CD8-positive, alpha-beta T cell (primary cell): ENCODE measurements at regions of chr2 and their contacts with region 1.

Region 1: GRCh38 chr2:160429248-160430000 is 64.2 kb downstream of the RBMS1 start:
- DNase-seq: peak in 2 of 9 experiments; percentile 72 to 81
- ATAC-seq: peak; percentile 53
- H3K4me3 ChIP-seq: no peak overlapping the region
- H3K4me3 Mint-ChIP-seq: peak overlapping the region; percentile 26
- H3K27ac ChIP-seq: peak overlapping the region in 1 of 2 experiments; percentile 77
- H3K27ac Mint-ChIP-seq: peak overlapping the region; percentile 92
- H3K4me1 ChIP-seq: peaks cover 42% of the 10 kb centered on the region
- H3K4me1 Mint-ChIP-seq: peaks cover 71% of the 10 kb centered on the region
- H3K27me3 ChIP-seq: no peaks in the 10 kb centered on the region
- H3K27me3 Mint-ChIP-seq: no peaks in the 10 kb centered on the region
- CTCF ChIP-seq: peak; percentile 84

Region 2: DNA sequence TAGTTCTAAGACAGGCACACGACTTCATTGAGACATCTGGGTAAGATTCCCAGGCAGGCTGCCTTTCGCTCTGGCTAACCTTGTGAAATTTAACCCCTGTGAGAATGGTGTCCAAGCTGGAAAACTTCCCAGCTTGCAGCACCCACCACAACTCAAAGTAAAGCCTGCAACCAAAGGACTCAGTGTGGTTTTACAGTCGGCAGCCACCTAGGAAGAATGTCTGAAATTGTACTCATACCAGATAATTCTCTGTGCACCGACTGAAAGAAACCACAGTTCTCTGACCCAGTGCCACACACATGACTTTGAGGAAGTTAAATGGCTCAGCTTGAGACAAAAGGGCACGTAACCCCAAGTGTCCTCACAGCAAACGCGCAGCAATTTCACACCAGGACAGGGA is 61.5 kb before region 1 on chr2:
- CTCF ChIA-PET with region 1: no interaction called
- POLR2A ChIA-PET with region 1: no interaction called
- intact Hi-C with region 1: no loop called
- DNase-seq: peak in 2 of 9 experiments; percentile 17 to 33
- ATAC-seq: peak; percentile 36
- H3K4me3 ChIP-seq: no peak overlapping the region
- H3K4me3 Mint-ChIP-seq: peak overlapping the region; percentile 32
- H3K27ac ChIP-seq: peak overlapping the region in 1 of 2 experiments; percentile 21
- H3K27ac Mint-ChIP-seq: peak overlapping the region; percentile 37
- H3K4me1 ChIP-seq: peaks cover 43% of the 10 kb centered on the region
- H3K4me1 Mint-ChIP-seq: peaks cover 86% of the 10 kb centered on the region
- H3K27me3 ChIP-seq: no peaks in the 10 kb centered on the region
- H3K27me3 Mint-ChIP-seq: no peaks in the 10 kb centered on the region
- CTCF ChIP-seq: no peak

Region 3: DNA sequence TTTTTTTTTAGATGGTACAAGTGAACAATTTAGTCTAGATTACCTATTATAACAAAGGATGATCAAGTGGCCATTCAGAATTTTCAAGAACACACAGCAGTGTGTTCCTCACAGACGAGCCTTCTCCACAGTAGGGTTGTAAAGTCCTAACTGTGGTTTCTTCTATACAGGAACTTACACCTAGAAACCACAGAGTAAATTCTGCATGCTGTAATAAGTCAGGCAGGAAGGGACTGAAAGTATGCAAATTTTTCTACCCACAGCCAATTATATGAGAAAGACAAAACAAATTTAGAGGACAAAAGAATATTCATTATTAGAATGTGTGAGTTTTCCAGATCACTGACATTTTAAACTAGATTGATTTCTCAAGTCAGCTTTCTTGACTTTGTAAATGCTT is 35.3 kb before region 1 on chr2:
- CTCF ChIA-PET with region 1: interaction called, 4 read pairs
- POLR2A ChIA-PET with region 1: no interaction called
- intact Hi-C with region 1: loop called in 1 of 2 experiments (anchors 5 kb)
- DNase-seq: peak in 2 of 9 experiments; percentile 69 to 80
- ATAC-seq: peak; percentile 92
- H3K4me3 ChIP-seq: peak overlapping the region in 1 of 2 experiments; percentile 21
- H3K4me3 Mint-ChIP-seq: peak overlapping the region; percentile 50
- H3K27ac ChIP-seq: peak overlapping the region in 1 of 2 experiments; percentile 49
- H3K27ac Mint-ChIP-seq: peak overlapping the region; percentile 86
- H3K4me1 ChIP-seq: peaks cover 88% of the 10 kb centered on the region
- H3K4me1 Mint-ChIP-seq: peaks cover 64% of the 10 kb centered on the region
- H3K27me3 ChIP-seq: no peaks in the 10 kb centered on the region
- H3K27me3 Mint-ChIP-seq: no peaks in the 10 kb centered on the region
- CTCF ChIP-seq: no peak

Region 4: GRCh38 chr2:160482673-160483072 is 53.2 kb after region 1 on chr2:
- CTCF ChIA-PET with region 1: no interaction called
- POLR2A ChIA-PET with region 1: interaction called, 4 read pairs
- intact Hi-C with region 1: loop called in 1 of 2 experiments (anchors 2 kb)
- DNase-seq: peak in 3 of 9 experiments; percentile 43 to 80 (median 67)
- ATAC-seq: peak; percentile 92
- H3K4me3 ChIP-seq: no peak overlapping the region
- H3K4me3 Mint-ChIP-seq: peak overlapping the region; percentile 49
- H3K27ac ChIP-seq: peak overlapping the region; percentile 39 to 42
- H3K27ac Mint-ChIP-seq: peak overlapping the region; percentile 87
- H3K4me1 ChIP-seq: peaks cover 61% of the 10 kb centered on the region
- H3K4me1 Mint-ChIP-seq: peaks cover 72% of the 10 kb centered on the region
- H3K27me3 ChIP-seq: no peaks in the 10 kb centered on the region
- H3K27me3 Mint-ChIP-seq: no peaks in the 10 kb centered on the region
- CTCF ChIP-seq: no peak

Region 5: GRCh38 chr2:160516547-160517365 is 87.3 kb after region 1 on chr2:
- CTCF ChIA-PET with region 1: no interaction called
- POLR2A ChIA-PET with region 1: no interaction called
- intact Hi-C with region 1: no loop called
- DNase-seq: peak in 2 of 9 experiments; percentile 11 to 13
- ATAC-seq: peak; percentile 40
- H3K4me3 ChIP-seq: no peak overlapping the region
- H3K4me3 Mint-ChIP-seq: no peak overlapping the region
- H3K27ac ChIP-seq: peak overlapping the region in 1 of 2 experiments; percentile 13
- H3K27ac Mint-ChIP-seq: peak overlapping the region; percentile 45
- H3K4me1 ChIP-seq: no peaks in the 10 kb centered on the region
- H3K4me1 Mint-ChIP-seq: peaks cover 22% of the 10 kb centered on the region
- H3K27me3 ChIP-seq: no peaks in the 10 kb centered on the region
- H3K27me3 Mint-ChIP-seq: no peaks in the 10 kb centered on the region
- CTCF ChIP-seq: no peak

Region 6: GRCh38 chr2:160652236-160652635 is 222.8 kb after region 1 on chr2:
- CTCF ChIA-PET with region 1: no interaction called
- POLR2A ChIA-PET with region 1: interaction called, 3 read pairs
- intact Hi-C with region 1: loop called (anchors 10 kb)
- DNase-seq: peak; percentile 12 to 79 (median 66)
- ATAC-seq: peak; percentile 99
- H3K4me3 ChIP-seq: peak overlapping the region in 1 of 2 experiments; percentile 7
- H3K4me3 Mint-ChIP-seq: peak overlapping the region; percentile 42
- H3K27ac ChIP-seq: no peak overlapping the region
- H3K27ac Mint-ChIP-seq: peak overlapping the region; percentile 5
- H3K4me1 ChIP-seq: peaks cover 20% of the 10 kb centered on the region
- H3K4me1 Mint-ChIP-seq: peaks cover 22% of the 10 kb centered on the region
- H3K27me3 ChIP-seq: no peaks in the 10 kb centered on the region
- H3K27me3 Mint-ChIP-seq: peaks cover 13% of the 10 kb centered on the region
- CTCF ChIP-seq: no peak